BJ (cell line): ENCODE measurements at regions of chr2 and their contacts with region 1.

Region 1: DNA sequence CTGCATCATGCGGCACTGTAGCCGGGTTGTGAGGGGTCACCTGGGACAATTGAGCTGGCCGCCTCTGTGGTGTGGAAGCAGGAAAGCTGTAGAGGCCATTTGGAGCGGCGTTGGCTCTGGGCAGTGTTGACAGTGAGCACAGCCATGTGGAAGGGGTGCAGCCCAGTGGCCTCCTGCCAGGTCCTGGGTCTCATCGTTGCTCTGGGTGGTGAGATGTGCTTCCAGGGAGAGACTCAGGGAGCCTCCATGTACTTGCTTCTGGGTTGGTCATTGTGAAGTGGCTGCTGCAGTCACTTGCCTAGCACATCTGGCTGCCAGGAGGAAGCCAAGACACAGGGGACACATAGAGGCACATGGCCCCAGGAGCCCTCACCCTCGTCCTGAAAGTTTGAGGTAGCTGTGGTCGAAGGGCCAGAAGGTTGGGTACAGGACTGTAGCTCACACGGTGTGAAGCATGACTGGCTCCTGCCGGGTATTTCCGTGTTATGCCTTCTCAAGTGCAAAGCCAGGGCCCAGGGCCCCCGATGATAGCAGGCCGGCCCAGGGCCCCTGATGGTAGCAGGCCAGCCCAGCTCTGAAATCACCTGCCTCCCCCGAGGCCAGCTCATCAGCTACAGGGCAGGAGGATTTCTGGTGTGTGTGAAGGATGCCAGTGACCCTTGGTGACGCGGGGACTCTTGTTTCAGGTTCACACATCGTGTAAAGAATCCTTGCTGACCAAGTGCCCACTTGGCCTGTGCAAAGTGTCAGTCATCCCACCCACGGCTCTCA is 82.6 kb downstream of the DGKD start:
- DNase-seq: no peak
- H3K4me3 ChIP-seq: no peak overlapping the region
- H3K27me3 ChIP-seq: no peaks in the 10 kb centered on the region
- CTCF ChIP-seq: no peak

Region 2: DNA sequence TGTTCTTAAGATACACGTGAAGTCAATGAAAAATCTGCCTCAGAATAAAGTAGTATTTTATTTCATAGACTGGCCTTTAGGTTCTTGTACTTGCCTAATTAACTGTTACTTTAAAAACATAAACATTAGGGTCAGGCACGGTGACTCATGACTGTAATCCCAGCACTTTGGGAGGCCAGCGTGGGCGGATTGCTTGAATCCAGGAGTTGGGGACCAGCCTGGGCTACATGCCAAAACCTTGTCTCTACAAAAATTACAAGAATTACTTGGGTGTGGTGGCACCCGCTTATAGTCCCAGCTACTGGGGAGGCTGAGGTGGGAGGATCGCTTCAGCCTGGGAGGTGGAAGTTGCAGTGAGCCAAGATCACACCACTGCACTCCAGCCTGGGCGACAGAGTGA is 582.8 kb before region 1 on chr2:
- CTCF ChIA-PET with region 1: no interaction called
- POLR2A ChIA-PET with region 1: no interaction called
- DNase-seq: peak; percentile 58
- H3K4me3 ChIP-seq: no peak overlapping the region
- H3K27me3 ChIP-seq: no peaks in the 10 kb centered on the region
- CTCF ChIP-seq: no peak

Region 3: GRCh38 chr2:233404222-233404621 is 32.7 kb before region 1 on chr2:
- CTCF ChIA-PET with region 1: interaction called, 82 read pairs
- POLR2A ChIA-PET with region 1: no interaction called
- DNase-seq: no peak
- H3K4me3 ChIP-seq: no peak overlapping the region
- H3K27me3 ChIP-seq: no peaks in the 10 kb centered on the region
- CTCF ChIP-seq: peak; percentile 68